ENCODE measurements at regions of chr22 and their contacts with region 1.

Region 1: DNA sequence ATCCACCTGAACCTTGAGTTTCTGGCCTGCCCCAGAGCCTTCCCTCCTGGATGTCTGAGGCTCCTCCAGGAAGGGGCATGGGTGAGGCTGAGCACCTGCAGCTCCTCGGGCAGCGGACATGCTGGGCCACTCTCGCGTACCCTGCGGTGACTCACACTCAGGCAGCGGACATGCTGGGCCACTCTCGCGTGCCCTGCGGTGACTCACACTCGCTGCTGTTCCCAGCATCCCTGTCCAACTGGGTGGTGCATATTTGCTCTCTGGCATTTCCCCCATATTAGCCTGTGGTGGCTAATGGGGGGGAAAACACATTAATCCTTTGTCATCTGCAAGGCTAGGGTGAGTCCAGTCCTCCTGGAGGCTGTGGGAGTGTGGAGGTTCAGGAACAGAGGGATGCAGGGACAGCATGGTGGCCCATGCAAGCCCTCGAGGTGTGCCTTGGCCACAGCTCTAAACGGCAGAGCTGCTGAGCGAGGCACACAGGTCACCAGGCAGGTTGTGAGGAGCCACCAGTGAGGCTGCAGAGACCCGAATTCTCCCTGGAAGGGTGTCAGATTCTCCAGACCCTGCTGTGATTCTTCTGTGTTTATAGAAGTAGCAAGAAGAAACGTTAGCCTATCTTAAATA is 728.1 kb downstream of the BRD1 start:
- DNase-seq: peak; percentile 14 to 21
- ATAC-seq: no peak
- H3K4me3 ChIP-seq: no peak overlapping the region
- H3K27ac ChIP-seq: no peak overlapping the region
- H3K4me1 ChIP-seq: no peaks in the 10 kb centered on the region
- H3K27me3 ChIP-seq: peaks cover 0 to 34% (median 2%) of the 10 kb centered on the region in 3 donors
- CTCF ChIP-seq: no peak

Region 2: GRCh38 chr22:49156660-49157285 is 57.2 kb after region 1 on chr22:
- intact Hi-C with region 1: loop called in 1 of 2 experiments (anchors 10 kb)
- DNase-seq: no peak
- ATAC-seq: no peak
- H3K4me3 ChIP-seq: no peak overlapping the region
- H3K27ac ChIP-seq: no peak overlapping the region
- H3K4me1 ChIP-seq: no peaks in the 10 kb centered on the region
- H3K27me3 ChIP-seq: peaks cover 0 to 13% (median 2%) of the 10 kb centered on the region in 3 donors
- CTCF ChIP-seq: no peak

Measured in psoas muscle (tissue), 8 donors.